ENCODE measurements at regions of chr5 and their contacts with region 1.

Region 1: DNA sequence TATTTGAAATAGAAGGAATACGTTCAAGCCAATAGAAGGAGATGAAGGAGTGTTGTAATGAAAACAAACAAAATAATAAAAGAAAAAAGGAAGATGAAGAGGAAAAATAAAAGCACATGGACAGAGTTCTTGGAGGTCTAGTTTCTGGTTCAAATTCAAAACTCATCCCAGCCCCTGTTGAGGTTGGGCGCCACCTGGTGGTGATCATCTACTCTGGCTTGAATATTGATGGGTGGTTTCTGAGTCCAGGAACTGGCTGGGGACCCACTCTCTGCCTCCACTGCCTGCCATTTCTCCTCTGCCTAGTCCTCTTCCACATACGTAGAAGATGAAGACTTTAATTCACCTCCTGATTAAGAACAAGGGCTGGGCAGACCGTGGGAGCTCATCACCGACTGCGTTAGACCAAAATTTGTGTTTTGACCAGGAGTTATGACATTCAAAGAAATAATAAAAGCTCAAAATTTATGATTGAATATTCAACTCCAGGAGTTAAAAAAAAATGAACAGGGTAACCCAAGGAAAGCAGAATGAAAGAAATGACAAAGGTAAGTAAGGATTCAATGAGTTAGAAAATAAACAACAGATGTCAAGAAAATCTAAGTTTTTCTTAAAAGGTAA is 99.0 kb upstream of the SLC1A3 start:
- DNase-seq: no peak
- H3K4me3 ChIP-seq: no peak overlapping the region
- H3K27ac ChIP-seq: no peak overlapping the region
- H3K4me1 ChIP-seq: peaks cover 5 to 35% (median 23%) of the 10 kb centered on the region in 4 donors
- H3K27me3 ChIP-seq: no peaks in the 10 kb centered on the region
- CTCF ChIP-seq: peak; percentile 74 to 89 (median 88)
- EP300 ChIP-seq: no peak
- POLR2A ChIP-seq: no peak

Region 2: DNA sequence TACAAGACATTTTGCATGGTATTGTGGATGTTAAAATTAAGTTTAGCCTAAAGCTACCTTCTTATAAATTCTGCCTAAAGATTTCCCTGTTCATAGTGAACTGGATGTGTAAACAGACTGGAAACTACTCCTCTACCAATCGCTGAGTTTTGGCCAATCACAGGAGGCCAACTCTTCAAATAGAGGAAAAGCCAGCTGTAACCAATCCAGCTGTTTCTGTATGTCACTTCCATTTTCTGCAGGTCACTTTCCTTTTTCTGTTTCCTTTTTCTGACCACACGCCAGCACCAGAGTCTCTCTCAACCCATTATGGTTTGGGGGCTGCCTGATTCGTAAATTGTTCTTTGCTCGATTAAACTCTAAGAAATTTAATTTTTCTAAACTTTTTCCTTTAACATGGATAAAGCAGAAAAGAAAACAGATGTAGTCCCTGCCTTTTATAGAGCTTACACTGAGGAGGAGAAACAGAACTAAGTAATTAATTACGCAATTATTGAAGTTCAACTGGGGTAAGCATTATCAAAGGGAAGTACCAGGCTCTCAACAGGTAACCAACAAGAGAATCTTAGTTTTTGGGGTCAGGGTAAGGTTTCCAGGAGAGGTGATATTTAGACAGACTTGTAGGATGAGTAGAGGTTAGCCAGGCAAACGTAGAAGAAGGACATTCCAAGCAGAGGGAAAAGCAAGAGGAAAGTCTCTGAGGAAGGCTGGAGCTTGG is 233.5 kb before region 1 on chr5:
- intact Hi-C with region 1: no loop called
- DNase-seq: no peak
- H3K4me3 ChIP-seq: no peak overlapping the region
- H3K27ac ChIP-seq: no peak overlapping the region
- H3K4me1 ChIP-seq: peaks cover 0 to 16% (median 6%) of the 10 kb centered on the region in 4 donors
- H3K27me3 ChIP-seq: no peaks in the 10 kb centered on the region
- CTCF ChIP-seq: no peak
- EP300 ChIP-seq: no peak
- POLR2A ChIP-seq: no peak

Region 3: DNA sequence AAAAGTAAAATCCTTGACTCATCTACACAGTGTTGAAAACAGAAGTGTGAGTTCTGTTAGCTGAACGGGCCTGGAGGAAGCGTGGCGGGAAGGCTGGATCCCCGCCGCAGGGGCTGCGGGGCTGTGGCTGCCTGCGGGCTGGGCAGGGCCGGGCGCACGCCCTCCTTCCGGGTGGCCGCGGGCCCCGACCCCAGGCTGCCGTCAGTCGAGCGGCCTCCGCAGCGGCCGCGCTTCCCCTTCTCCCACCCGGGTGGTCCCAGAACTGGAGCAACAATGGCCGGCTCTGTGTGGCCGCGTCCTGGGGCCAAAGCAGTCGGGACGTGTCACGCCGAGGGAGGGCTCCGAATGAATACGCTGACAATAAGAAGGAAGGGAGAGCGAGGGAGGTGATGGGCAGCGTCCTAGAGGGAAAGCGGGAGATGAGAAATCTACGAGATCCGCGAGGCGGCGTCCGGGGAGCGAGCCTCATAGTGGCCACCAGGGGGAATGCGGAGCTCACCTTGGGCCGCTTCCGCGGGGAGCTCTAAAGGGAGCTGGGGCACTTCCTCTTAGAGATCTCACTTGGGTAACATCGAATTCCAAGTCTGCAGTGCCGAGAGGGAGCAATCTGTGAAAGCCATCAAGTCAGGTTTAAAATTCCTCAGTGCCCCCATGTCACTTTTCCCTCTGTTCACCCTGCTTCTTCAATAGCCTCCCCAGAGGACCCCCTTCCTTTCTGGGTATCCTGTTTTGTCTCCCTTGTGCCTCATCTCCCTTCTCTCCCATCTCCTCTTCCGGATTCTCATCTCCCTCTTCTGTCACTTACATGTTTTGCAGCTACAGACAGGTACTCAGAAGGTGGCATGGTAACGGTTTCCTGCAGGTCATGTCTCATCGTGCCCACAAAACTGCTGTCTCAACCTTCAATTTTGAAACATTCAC is 182.9 kb after region 1 on chr5:
- intact Hi-C with region 1: loop called (anchors 5 kb)
- DNase-seq: peak; percentile 95
- H3K4me3 ChIP-seq: peak overlapping the region; percentile 61 to 66 (median 64)
- H3K27ac ChIP-seq: peak overlapping the region; percentile 62 to 81 (median 76)
- H3K4me1 ChIP-seq: peaks cover 20 to 39% (median 34%) of the 10 kb centered on the region in 4 donors
- H3K27me3 ChIP-seq: no peaks in the 10 kb centered on the region
- CTCF ChIP-seq: peak; percentile 69 to 83 (median 72)
- EP300 ChIP-seq: no peak
- POLR2A ChIP-seq: no peak

Region 4: DNA sequence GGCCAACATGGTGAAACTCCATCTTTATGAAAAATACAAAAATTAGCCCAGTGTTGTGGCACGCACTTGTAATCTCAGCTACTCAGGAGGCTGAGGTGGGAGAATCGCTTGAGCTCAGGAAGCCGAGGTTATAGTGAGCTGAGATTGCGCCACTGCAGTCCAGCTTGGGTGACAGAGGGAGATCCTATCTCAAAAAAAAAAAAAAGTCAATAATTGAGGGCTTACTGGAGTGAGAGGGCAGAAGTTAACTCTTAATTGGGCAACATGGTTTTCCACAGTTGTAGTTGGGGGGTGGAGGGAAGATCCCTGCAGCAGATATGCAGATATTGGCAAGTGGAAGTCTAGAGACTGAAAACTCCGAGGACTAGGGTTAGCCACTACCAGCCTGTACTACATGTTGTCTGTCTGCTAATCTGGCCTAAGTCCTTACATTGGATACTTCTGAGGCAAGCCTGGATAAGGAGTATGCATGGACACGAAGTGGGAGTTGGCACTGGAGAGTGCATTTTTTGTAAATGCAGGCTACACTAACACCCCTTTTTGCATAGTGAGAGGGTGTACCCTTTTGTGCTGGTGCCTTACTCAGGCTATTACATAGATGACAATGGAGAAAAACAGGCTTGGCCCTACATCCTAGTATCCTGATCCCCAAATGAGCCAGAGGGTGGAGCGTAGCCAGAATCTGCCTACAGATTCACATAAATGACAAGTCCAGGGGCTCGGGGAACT is 280.1 kb after region 1 on chr5:
- intact Hi-C with region 1: no loop called
- DNase-seq: no peak
- H3K4me3 ChIP-seq: no peak overlapping the region
- H3K27ac ChIP-seq: no peak overlapping the region
- H3K4me1 ChIP-seq: no peaks in the 10 kb centered on the region
- H3K27me3 ChIP-seq: no peaks in the 10 kb centered on the region
- CTCF ChIP-seq: no peak
- EP300 ChIP-seq: no peak
- POLR2A ChIP-seq: no peak

Measured in esophagus muscularis mucosa (tissue), 4 donors.